Endothelial cell of umbilical vein (primary cell): ENCODE measurements at regions of chr19 and their contacts with region 1.

Region 1: GRCh38 chr19:38964738-38965137 is 10.8 kb downstream of the FBXO17 start:
- DNase-seq: no peak
- H3K4me3 ChIP-seq: no peak overlapping the region
- H3K27ac ChIP-seq: no peak overlapping the region
- H3K4me1 ChIP-seq: peaks cover 2% of the 10 kb centered on the region
- H3K27me3 ChIP-seq: no peaks in the 10 kb centered on the region
- CTCF ChIP-seq: no peak
- POLR2A ChIP-seq: no peak

Region 2: GRCh38 chr19:38929929-38930775 is 34.6 kb before region 1 on chr19 and contains the start of gene SARS2:
- CTCF ChIA-PET with region 1: no interaction called
- POLR2A ChIA-PET with region 1: no interaction called
- dilution Hi-C with region 1: no loop called
- intact Hi-C with region 1: no loop called
- DNase-seq: peak; percentile 95
- H3K4me3 ChIP-seq: peak within 1 kb of the TSS; percentile 50 to 78 (median 58)
- H3K27ac ChIP-seq: peak within 1 kb of the TSS; percentile 69
- H3K4me1 ChIP-seq: peaks cover 14% of the 10 kb centered on the region
- H3K27me3 ChIP-seq: no peaks in the 10 kb centered on the region
- CTCF ChIP-seq: peak; percentile 99 to 100
- POLR2A ChIP-seq: peak; percentile 85
- total RNA-seq, gene SARS2: 38.5 and 40.3 TPM in 2 replicates

Region 3: DNA sequence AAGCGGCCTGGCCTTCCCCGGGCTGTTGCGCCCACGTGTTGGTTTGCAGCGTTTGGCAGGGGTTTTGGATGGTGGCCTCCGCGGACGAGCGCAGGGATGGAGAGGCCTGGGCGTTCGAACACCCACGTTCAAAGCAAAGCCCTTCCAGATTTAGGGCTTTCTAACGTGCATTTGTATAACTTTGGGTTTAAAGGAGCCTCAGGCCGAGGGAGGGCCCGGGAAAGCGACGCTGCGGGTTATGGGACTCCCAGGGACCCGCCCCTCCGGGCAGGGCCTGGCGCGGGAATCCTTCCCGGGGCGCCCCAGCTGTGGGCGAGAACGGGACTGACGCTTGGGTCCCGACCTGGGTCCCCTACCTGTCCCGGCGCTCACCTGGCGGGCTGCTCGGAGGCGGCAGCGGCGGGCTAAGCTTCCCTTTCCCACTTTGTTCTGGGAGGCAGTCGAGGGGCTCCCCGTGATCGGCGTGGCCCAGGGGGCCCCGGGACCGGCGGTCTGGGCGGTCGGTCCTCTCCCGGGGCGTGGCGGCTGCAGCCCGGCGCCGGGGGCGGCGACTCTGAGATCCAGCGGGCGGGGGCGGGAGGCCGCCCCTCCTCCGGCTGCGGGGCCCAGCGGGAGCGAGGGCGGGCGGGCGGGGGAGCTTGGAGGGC is 10.6 kb after region 1 on chr19 and contains the start of gene FBXO17:
- CTCF ChIA-PET with region 1: interaction called, 39 read pairs
- POLR2A ChIA-PET with region 1: interaction called, 4 read pairs
- dilution Hi-C with region 1: no loop called
- intact Hi-C with region 1: no loop called
- DNase-seq: peak; percentile 53
- H3K4me3 ChIP-seq: peak within 1 kb of the TSS; percentile 48 to 65 (median 48)
- H3K27ac ChIP-seq: peak within 1 kb of the TSS; percentile 47
- H3K4me1 ChIP-seq: peaks cover 14% of the 10 kb centered on the region
- H3K27me3 ChIP-seq: no peaks in the 10 kb centered on the region
- CTCF ChIP-seq: no peak
- POLR2A ChIP-seq: peak; percentile 75
- total RNA-seq, gene FBXO17: 23.8 and 24.4 TPM in 2 replicates

Region 4: DNA sequence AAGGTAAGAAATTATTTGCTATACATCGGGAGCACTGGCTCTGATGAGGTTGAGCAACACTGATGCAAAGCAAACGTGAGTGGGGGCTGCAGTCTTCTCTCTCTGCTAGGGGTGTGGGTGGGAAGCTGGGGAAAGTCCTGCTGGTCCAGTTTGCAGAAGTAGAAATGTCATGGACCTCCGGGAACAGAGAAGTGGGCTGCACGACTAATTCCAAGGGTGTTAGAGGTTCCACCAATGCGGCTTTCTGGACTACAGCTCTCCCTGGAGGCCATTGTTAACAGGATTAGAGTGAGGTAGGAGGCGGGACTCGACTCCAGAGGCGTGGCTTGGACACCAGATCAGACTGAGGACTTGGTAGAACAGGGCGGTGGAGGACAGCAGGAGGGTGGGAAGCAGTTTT is 73.4 kb after region 1 on chr19:
- CTCF ChIA-PET with region 1: interaction called, 37 read pairs
- POLR2A ChIA-PET with region 1: no interaction called
- dilution Hi-C with region 1: no loop called
- intact Hi-C with region 1: loop called (anchors 1 kb)
- DNase-seq: peak; percentile 55
- H3K4me3 ChIP-seq: no peak overlapping the region
- H3K27ac ChIP-seq: no peak overlapping the region
- H3K4me1 ChIP-seq: no peaks in the 10 kb centered on the region
- H3K27me3 ChIP-seq: no peaks in the 10 kb centered on the region
- CTCF ChIP-seq: peak in 1 of 2 donors; percentile 24
- POLR2A ChIP-seq: no peak

Region 5: DNA sequence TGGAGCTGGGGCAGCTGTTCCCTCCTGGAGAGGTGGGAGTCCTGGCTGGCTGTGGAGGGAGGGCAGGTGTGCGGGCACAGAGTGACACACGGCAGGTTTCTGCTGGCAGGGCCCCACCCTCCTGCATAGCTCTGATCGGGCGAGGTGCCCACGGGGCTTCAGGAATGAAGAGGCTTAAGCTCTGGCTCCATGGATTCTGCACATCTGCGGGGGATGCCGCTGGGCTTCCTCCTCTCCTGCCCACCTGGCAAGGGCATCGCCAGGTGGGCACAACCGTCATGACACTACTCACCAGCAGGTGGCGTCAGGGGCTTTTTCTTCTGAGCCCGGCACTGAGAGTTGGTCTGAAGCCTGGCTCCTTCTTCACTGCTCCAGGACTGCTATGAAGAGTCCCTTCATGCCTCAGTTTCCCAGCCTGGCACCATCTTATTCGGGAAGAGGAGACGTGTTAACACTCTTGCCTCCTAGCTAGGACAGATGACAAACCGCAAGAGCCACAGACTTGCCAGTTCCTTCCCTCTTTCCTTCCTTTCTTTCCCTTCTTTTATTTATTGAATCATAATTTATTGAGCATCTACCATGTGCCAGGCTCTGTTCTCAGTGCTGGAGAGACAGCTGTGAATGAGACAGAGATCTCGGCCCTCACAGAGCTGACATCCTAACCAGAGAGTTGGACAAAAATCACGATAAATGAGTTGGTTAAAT is 145.7 kb after region 1 on chr19:
- CTCF ChIA-PET with region 1: interaction called, 4 read pairs
- POLR2A ChIA-PET with region 1: no interaction called
- dilution Hi-C with region 1: no loop called
- intact Hi-C with region 1: loop called (anchors 2 kb)
- DNase-seq: peak; percentile 28
- H3K4me3 ChIP-seq: no peak overlapping the region
- H3K27ac ChIP-seq: no peak overlapping the region
- H3K4me1 ChIP-seq: no peaks in the 10 kb centered on the region
- H3K27me3 ChIP-seq: peaks cover 0 to 2% of the 10 kb centered on the region in 2 experiments
- CTCF ChIP-seq: peak; percentile 77 to 84
- POLR2A ChIP-seq: no peak

Region 6: GRCh38 chr19:39166571-39167391 is 202.0 kb after region 1 on chr19:
- CTCF ChIA-PET with region 1: no interaction called
- POLR2A ChIA-PET with region 1: no interaction called
- dilution Hi-C with region 1: no loop called
- intact Hi-C with region 1: no loop called
- DNase-seq: no peak
- H3K4me3 ChIP-seq: no peak overlapping the region
- H3K27ac ChIP-seq: no peak overlapping the region
- H3K4me1 ChIP-seq: no peaks in the 10 kb centered on the region
- H3K27me3 ChIP-seq: no peaks in the 10 kb centered on the region
- CTCF ChIP-seq: no peak
- POLR2A ChIP-seq: no peak

Region 7: GRCh38 chr19:39187559-39187957 is 222.8 kb after region 1 on chr19:
- CTCF ChIA-PET with region 1: no interaction called
- POLR2A ChIA-PET with region 1: no interaction called
- dilution Hi-C with region 1: no loop called
- intact Hi-C with region 1: loop called (anchors 2 kb)
- DNase-seq: no peak
- H3K4me3 ChIP-seq: no peak overlapping the region
- H3K27ac ChIP-seq: no peak overlapping the region
- H3K4me1 ChIP-seq: peaks cover 5% of the 10 kb centered on the region
- H3K27me3 ChIP-seq: peaks cover 4 to 7% of the 10 kb centered on the region in 2 experiments
- CTCF ChIP-seq: no peak
- POLR2A ChIP-seq: no peak

Region 8: DNA sequence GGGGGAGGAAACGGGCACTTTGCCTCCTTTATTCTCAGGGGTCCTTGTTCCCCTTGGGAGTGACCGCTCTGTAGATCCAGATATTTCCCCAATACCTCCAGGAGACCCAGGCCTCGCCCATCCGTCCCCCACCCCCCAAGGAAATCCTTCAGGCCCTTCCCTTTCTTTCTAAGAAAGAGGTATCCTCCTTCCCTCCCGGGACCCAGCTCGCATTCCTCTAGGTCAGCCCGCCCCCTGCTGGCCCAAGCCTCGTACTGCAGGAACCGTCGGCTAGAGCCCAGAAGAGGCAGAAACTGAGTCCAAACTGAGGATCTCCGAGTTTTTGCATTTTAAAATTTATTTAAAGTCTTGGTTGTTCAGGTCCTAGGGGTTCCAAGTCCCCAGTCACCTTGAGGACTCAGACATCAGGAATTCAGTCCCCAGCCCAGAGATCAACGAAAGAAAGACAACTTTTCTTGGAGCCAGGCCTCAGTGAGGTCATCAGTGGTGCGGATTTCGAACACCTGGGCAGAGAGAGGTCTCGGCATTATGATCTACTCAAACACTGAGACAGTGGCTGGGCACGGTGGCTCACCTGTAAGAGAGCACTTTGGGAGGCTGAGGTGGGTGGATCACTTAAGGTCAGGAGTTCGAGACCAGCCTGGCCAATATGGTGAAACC is 363.4 kb after region 1 on chr19:
- CTCF ChIA-PET with region 1: interaction called, 5 read pairs
- POLR2A ChIA-PET with region 1: no interaction called
- dilution Hi-C with region 1: no loop called
- intact Hi-C with region 1: loop called (anchors 1 kb)
- DNase-seq: peak; percentile 62
- H3K4me3 ChIP-seq: no peak overlapping the region
- H3K27ac ChIP-seq: no peak overlapping the region
- H3K4me1 ChIP-seq: no peaks in the 10 kb centered on the region
- H3K27me3 ChIP-seq: no peaks in the 10 kb centered on the region
- CTCF ChIP-seq: peak; percentile 95 to 97
- POLR2A ChIP-seq: no peak